Thyroid gland (tissue), 4 donors: ENCODE measurements at regions of chr22 and their contacts with region 1.

Region 1: DNA sequence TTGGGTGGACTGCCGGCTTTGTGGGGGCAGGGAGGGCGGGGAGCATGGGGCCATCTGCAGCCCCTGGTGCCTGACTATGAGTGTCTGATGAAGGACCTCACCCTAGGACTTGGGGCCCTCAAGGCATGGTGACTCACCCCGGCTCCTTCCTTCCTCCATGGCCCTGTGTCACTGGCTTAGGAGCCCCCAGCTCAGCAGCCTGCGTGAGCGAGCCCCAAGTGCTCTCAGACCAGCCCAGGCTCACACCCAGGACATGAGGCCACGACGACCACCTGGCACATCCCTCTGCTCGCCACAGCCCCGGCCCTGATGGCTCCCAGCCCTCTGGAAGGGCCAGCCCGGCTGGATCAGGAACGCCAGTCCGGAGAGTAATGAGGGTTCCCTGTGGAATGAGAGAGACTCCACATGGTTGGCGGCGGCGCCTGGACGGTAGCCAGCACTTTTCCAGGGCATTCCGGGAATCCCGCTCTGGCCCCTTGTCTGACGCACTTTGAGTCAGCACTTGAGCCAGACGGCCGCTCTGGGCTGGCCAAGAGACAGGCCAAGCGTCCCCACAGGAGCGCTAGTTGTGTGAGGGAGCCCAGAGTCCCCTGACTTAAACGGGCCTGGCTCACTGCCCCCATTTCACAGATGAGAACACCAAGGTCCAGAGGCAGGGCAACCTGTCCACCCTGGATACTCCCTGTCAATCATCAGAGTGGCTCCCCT is 50.7 kb upstream of the SHISAL1 start:
- DNase-seq: peak; percentile 72 to 78
- H3K4me3 ChIP-seq: no peak overlapping the region
- H3K27ac ChIP-seq: peak overlapping the region in 2 of 3 donors; percentile 28 to 74
- H3K4me1 ChIP-seq: peaks cover 0 to 46% of the 10 kb centered on the region in 2 donors
- H3K27me3 ChIP-seq: no peaks in the 10 kb centered on the region
- CTCF ChIP-seq: no peak
- POLR2A ChIP-seq: no peak

Region 2: GRCh38 chr22:44497218-44497904 is 133.9 kb after region 1 on chr22:
- intact Hi-C with region 1: loop called (anchors 10 kb)
- DNase-seq: peak; percentile 14 to 17
- H3K4me3 ChIP-seq: peak overlapping the region; percentile 69 to 98 (median 78)
- H3K27ac ChIP-seq: peak overlapping the region; percentile 45 to 67 (median 52)
- H3K4me1 ChIP-seq: peaks cover 6 to 13% of the 10 kb centered on the region in 2 donors
- H3K27me3 ChIP-seq: no peaks in the 10 kb centered on the region
- CTCF ChIP-seq: no peak
- POLR2A ChIP-seq: no peak